ENCODE measurements at regions of chr1 and their contacts with region 1.

Region 1: GRCh38 chr1:161071886-161072371 is 2.2 kb upstream of the ARHGAP30 start:
- DNase-seq: peak; percentile 71
- ATAC-seq: no peak
- H3K4me3 ChIP-seq: no peak overlapping the region
- H3K4me3 Mint-ChIP-seq: no peak overlapping the region
- H3K27ac ChIP-seq: no peak overlapping the region
- H3K27ac Mint-ChIP-seq: peak overlapping the region; percentile 12
- H3K4me1 ChIP-seq: peaks cover 20 to 35% of the 10 kb centered on the region in 2 donors
- H3K4me1 Mint-ChIP-seq: peaks cover 37% of the 10 kb centered on the region
- H3K27me3 ChIP-seq: no peaks in the 10 kb centered on the region
- H3K27me3 Mint-ChIP-seq: no peaks in the 10 kb centered on the region
- CTCF ChIP-seq: peak; percentile 81

Region 2: GRCh38 chr1:160070243-160071163 is 1001.4 kb before region 1 on chr1:
- CTCF ChIA-PET with region 1: no interaction called
- POLR2A ChIA-PET with region 1: no interaction called
- intact Hi-C with region 1: no loop called
- DNase-seq: peak; percentile 81
- ATAC-seq: peak; percentile 98
- H3K4me3 ChIP-seq: peak overlapping the region in 4 of 5 experiments; percentile 48 to 63 (median 60)
- H3K4me3 Mint-ChIP-seq: peak overlapping the region; percentile 90
- H3K27ac ChIP-seq: no peak overlapping the region
- H3K27ac Mint-ChIP-seq: no peak overlapping the region
- H3K4me1 ChIP-seq: peaks cover 11 to 12% of the 10 kb centered on the region in 2 donors
- H3K4me1 Mint-ChIP-seq: peaks cover 12% of the 10 kb centered on the region
- H3K27me3 ChIP-seq: peaks cover 0 to 32% (median 19%) of the 10 kb centered on the region in 4 experiments
- H3K27me3 Mint-ChIP-seq: peaks cover 56% of the 10 kb centered on the region
- CTCF ChIP-seq: no peak

Region 3: DNA sequence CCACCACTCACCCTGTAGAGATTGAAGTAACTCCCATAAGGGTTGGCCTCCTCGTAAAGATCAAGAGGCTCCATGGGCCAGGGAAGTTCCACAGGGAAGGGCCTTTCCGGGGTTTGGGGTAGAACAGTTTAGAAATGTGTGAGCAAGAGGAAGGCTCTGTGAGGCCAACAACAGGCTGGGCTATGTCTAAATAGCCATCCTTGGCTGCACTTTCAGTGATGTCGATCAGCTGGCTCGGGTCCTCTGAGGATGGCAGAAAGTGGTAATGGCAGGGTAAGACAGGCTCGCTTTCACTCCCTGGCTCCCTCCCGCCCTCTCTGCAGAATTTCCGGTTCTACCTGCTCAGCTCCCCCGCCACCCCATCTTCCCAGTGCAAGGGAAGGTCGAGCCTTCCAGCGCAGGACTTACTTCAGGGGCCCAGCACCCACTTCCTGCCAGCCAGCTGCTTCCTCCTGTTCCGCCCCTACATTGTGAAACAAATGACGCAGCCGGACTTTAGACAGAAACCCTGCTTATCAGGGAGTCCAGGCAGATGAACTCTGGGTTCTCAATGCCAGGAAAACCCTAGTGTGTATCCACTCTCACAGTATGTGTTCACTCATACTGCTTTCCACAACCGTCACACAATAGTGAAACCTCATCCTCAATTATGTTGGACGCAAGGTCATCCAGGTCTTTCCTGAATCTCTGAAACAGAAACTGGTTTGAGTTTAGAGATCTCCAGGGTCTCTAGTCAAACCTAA is 58.3 kb before region 1 on chr1:
- CTCF ChIA-PET with region 1: interaction called, 15 read pairs
- POLR2A ChIA-PET with region 1: no interaction called
- intact Hi-C with region 1: no loop called
- DNase-seq: peak; percentile 80
- ATAC-seq: peak; percentile 83
- H3K4me3 ChIP-seq: peak overlapping the region; percentile 20 to 65 (median 52)
- H3K4me3 Mint-ChIP-seq: peak overlapping the region; percentile 89
- H3K27ac ChIP-seq: peak overlapping the region; percentile 76 to 86
- H3K27ac Mint-ChIP-seq: peak overlapping the region; percentile 99
- H3K4me1 ChIP-seq: peaks cover 19 to 25% of the 10 kb centered on the region in 2 donors
- H3K4me1 Mint-ChIP-seq: peaks cover 22% of the 10 kb centered on the region
- H3K27me3 ChIP-seq: no peaks in the 10 kb centered on the region
- H3K27me3 Mint-ChIP-seq: no peaks in the 10 kb centered on the region
- CTCF ChIP-seq: no peak

Region 4: GRCh38 chr1:161021165-161021960 is 50.6 kb before region 1 on chr1:
- CTCF ChIA-PET with region 1: interaction called, 4 read pairs
- POLR2A ChIA-PET with region 1: interaction called, 3 read pairs
- intact Hi-C with region 1: loop called (anchors 1 kb)
- DNase-seq: peak; percentile 92
- ATAC-seq: peak; percentile 93
- H3K4me3 ChIP-seq: peak overlapping the region; percentile 50 to 83 (median 81)
- H3K4me3 Mint-ChIP-seq: peak overlapping the region; percentile 96
- H3K27ac ChIP-seq: peak overlapping the region; percentile 55 to 85
- H3K27ac Mint-ChIP-seq: peak overlapping the region; percentile 91
- H3K4me1 ChIP-seq: peaks cover 22 to 23% of the 10 kb centered on the region in 2 donors
- H3K4me1 Mint-ChIP-seq: peaks cover 26% of the 10 kb centered on the region
- H3K27me3 ChIP-seq: no peaks in the 10 kb centered on the region
- H3K27me3 Mint-ChIP-seq: no peaks in the 10 kb centered on the region
- CTCF ChIP-seq: no peak

Region 5: GRCh38 chr1:161038523-161039153 is 33.3 kb before region 1 on chr1 and contains the start of gene TSTD1:
- CTCF ChIA-PET with region 1: interaction called, 127 read pairs
- POLR2A ChIA-PET with region 1: interaction called, 108 read pairs
- intact Hi-C with region 1: no loop called
- DNase-seq: peak; percentile 94
- ATAC-seq: peak; percentile 88
- H3K4me3 ChIP-seq: peak within 1 kb of the TSS; percentile 56 to 98 (median 94)
- H3K4me3 Mint-ChIP-seq: peak within 1 kb of the TSS; percentile 93
- H3K27ac ChIP-seq: peak within 1 kb of the TSS; percentile 81 to 94
- H3K27ac Mint-ChIP-seq: peak within 1 kb of the TSS; percentile 97
- H3K4me1 ChIP-seq: peaks cover 50 to 75% of the 10 kb centered on the region in 2 donors
- H3K4me1 Mint-ChIP-seq: peaks cover 55% of the 10 kb centered on the region
- H3K27me3 ChIP-seq: no peaks in the 10 kb centered on the region
- H3K27me3 Mint-ChIP-seq: no peaks in the 10 kb centered on the region
- CTCF ChIP-seq: no peak
- total RNA-seq, gene TSTD1: 85.6 and 94.4 TPM in 2 replicates

Region 6: GRCh38 chr1:161153679-161154426 is 81.9 kb after region 1 on chr1 and contains the start of gene UFC1:
- CTCF ChIA-PET with region 1: interaction called, 5 read pairs
- POLR2A ChIA-PET with region 1: interaction called, 12 read pairs
- intact Hi-C with region 1: loop called (anchors 2 kb)
- DNase-seq: peak; percentile 94
- ATAC-seq: peak; percentile 97
- H3K4me3 ChIP-seq: peak within 1 kb of the TSS; percentile 88 to 100 (median 90)
- H3K4me3 Mint-ChIP-seq: peak within 1 kb of the TSS; percentile 97
- H3K27ac ChIP-seq: peak within 1 kb of the TSS; percentile 95 to 98
- H3K27ac Mint-ChIP-seq: peak within 1 kb of the TSS; percentile 99
- H3K4me1 ChIP-seq: peaks cover 15 to 17% of the 10 kb centered on the region in 2 donors
- H3K4me1 Mint-ChIP-seq: peaks cover 26% of the 10 kb centered on the region
- H3K27me3 ChIP-seq: no peaks in the 10 kb centered on the region
- H3K27me3 Mint-ChIP-seq: no peaks in the 10 kb centered on the region
- CTCF ChIP-seq: no peak
- total RNA-seq, gene UFC1: 78.1 and 91.0 TPM in 2 replicates

Measured in B cell (primary cell).